CD4-positive, alpha-beta memory T cell (primary cell): ENCODE measurements at regions of chr20 and their contacts with region 1.

Region 1: DNA sequence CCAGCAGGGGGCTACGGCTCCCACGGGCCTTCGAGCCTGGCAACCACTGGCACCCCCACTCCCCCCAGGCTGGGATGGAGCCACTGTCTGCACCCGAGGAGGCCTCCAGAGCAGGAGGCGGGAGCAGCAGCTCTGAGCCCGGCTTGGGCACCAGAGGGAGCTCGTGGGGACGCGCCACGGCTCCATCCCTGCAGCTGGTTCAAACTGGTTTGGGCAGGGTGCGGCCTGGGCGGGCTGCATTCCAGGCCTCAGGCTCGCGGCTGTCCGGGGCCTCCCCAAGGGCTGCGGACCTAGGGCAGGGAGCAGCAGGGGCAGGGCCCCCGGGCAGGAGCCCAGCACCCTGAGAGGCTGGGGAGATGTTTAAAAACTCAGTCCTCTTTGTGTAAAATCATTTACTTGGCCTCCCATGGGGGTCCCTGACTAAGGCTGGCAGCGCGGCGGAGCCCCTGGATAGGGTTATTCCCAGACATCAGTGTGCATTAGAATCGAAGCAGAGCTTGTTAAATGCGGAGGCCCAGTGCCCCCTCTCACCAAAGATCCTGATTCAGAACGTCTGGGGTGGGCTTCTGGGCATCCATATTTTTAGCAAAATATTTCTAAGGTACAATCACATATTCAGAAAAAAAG is 4.1 kb upstream of the BCAS4 start:
- DNase-seq: peak; percentile 69 to 75 (median 72)
- H3K4me3 ChIP-seq: peak overlapping the region; percentile 6 to 30
- H3K4me3 Mint-ChIP-seq: peak overlapping the region in 4 of 8 donors; percentile 31 to 61 (median 39)
- H3K27ac ChIP-seq: peak overlapping the region; percentile 53
- H3K27ac Mint-ChIP-seq: peak overlapping the region in 4 of 7 donors; percentile 17 to 81 (median 60)
- H3K4me1 ChIP-seq: peaks cover 20% of the 10 kb centered on the region
- H3K4me1 Mint-ChIP-seq: peaks cover 4 to 11% (median 9%) of the 10 kb centered on the region in 4 donors
- H3K27me3 ChIP-seq: no peaks in the 10 kb centered on the region
- H3K27me3 Mint-ChIP-seq: no peaks in the 10 kb centered on the region

Region 2: DNA sequence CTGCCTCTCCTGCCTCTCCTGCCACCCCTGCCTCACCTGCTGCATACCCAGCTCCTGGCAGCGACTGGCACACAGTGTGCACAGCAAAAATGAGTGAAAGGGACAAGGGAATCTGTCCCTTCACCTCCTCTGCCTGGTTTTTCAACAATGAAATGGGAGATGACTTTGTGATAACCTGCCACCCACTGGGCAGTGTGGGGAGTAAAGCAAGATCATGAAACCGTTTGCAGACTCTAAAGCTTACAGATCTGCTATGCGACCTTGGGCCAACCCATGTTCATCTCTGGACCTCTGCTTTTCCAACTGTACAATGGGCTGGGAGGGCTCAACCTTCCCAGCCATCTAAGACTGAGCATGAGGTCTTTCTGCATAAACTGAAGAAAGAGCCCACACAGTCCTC is 180.5 kb before region 1 on chr20:
- CTCF ChIA-PET with region 1: no interaction called
- POLR2A ChIA-PET with region 1: no interaction called
- intact Hi-C with region 1: no loop called
- DNase-seq: no peak
- H3K4me3 ChIP-seq: no peak overlapping the region
- H3K4me3 Mint-ChIP-seq: no peak overlapping the region
- H3K27ac ChIP-seq: no peak overlapping the region
- H3K27ac Mint-ChIP-seq: no peak overlapping the region
- H3K4me1 ChIP-seq: no peaks in the 10 kb centered on the region
- H3K4me1 Mint-ChIP-seq: no peaks in the 10 kb centered on the region
- H3K27me3 ChIP-seq: no peaks in the 10 kb centered on the region
- H3K27me3 Mint-ChIP-seq: peaks cover 4 to 5% of the 10 kb centered on the region in 2 donors

Region 3: GRCh38 chr20:50731055-50731871 is 59.5 kb before region 1 on chr20 and contains the start of gene PARD6B:
- CTCF ChIA-PET with region 1: interaction called, 4 read pairs
- POLR2A ChIA-PET with region 1: interaction called, 9 read pairs
- intact Hi-C with region 1: loop called (anchors 2 kb)
- DNase-seq: peak; percentile 99 to 100 (median 100)
- H3K4me3 ChIP-seq: peak within 1 kb of the TSS; percentile 66 to 72
- H3K4me3 Mint-ChIP-seq: peak within 1 kb of the TSS; percentile 90 to 95 (median 92)
- H3K27ac ChIP-seq: peak within 1 kb of the TSS; percentile 55
- H3K27ac Mint-ChIP-seq: peak within 1 kb of the TSS; percentile 83 to 91 (median 87)
- H3K4me1 ChIP-seq: peaks cover 21% of the 10 kb centered on the region
- H3K4me1 Mint-ChIP-seq: peaks cover 16 to 37% (median 24%) of the 10 kb centered on the region in 4 donors
- H3K27me3 ChIP-seq: no peaks in the 10 kb centered on the region
- H3K27me3 Mint-ChIP-seq: no peaks in the 10 kb centered on the region
- total RNA-seq, gene PARD6B: 10.9 to 12.7 TPM

Region 4: DNA sequence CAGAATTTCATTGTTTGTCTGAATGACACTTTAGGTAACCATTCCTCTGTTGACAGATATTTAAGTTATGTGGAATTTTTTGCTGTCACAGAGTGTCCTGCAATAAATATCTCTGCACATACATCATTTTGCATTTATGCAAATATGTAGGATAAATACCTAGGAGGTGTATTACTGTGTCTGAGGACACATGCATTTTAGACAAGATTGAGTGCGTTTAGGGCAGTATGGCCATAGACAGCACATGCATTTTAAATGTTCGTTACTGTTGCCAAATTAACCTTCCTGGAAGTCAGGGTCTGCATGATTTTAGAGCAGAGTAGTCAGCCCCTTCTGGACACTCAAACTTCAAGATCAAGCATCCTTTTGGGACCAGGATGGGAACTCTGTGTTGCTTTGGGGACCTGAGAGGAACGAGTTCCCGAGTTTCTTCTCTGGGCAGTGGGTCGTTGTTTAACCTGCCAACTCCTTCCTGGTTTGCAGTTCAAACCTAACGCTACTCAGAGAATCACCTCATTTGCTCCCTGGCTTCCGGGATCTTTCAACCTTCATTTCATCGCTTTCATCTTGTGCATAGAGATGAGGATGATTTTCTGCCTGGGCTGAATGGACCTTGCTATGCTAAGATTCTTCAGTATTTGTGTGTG is 13.8 kb after region 1 on chr20:
- CTCF ChIA-PET with region 1: interaction called, 16 read pairs
- POLR2A ChIA-PET with region 1: interaction called, 10 read pairs
- intact Hi-C with region 1: loop called (anchors 1 kb)
- DNase-seq: peak; percentile 23 to 52 (median 37)
- H3K4me3 ChIP-seq: peak overlapping the region in 1 of 2 donors; percentile 22
- H3K4me3 Mint-ChIP-seq: peak overlapping the region in 7 of 8 donors; percentile 22 to 74 (median 59)
- H3K27ac ChIP-seq: peak overlapping the region; percentile 45
- H3K27ac Mint-ChIP-seq: peak overlapping the region; percentile 77 to 94 (median 90)
- H3K4me1 ChIP-seq: peaks cover 16% of the 10 kb centered on the region
- H3K4me1 Mint-ChIP-seq: peaks cover 14 to 24% (median 18%) of the 10 kb centered on the region in 4 donors
- H3K27me3 ChIP-seq: no peaks in the 10 kb centered on the region
- H3K27me3 Mint-ChIP-seq: no peaks in the 10 kb centered on the region

Region 5: DNA sequence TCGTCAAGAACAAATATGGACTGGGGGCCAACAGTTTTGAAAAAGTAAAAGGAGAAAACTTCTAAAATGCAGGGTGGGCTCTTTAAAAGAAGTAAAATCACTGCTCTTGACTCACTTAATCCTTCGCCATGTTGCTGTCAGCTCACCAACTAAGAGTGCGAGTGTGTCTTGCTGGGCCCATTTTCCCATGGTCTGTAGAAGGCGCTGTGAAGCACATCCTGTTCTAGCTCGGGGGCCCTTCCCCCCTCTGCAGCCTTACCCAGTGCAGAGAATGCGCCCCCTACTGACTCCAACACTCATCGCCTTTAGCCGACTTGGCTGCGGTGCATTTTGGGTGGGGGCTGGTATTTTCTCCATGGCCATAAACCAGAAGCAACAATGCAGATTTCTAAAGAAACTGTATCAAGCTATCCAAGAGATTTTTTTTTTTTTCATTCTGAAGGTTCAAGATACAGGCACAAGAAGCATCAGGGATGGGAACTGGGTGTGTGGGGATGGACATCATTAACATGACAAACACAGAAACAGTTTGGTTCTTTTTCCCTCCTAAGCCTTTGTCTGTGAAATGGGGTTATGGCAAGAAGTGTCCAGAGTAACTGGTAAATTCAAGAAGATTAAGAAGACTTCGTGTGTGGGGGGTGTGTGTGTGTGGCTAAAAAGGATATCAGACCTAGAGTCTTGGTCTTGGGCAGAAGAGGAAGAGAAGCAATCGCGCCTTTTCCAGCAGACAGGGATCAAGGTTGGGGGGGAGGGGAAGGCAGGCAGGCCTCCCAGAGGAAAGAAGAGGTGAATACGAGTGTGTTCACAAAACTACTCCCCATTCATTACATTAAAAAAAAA is 138.8 kb after region 1 on chr20:
- CTCF ChIA-PET with region 1: interaction called, 298 read pairs
- POLR2A ChIA-PET with region 1: interaction called, 109 read pairs
- intact Hi-C with region 1: loop called (anchors 1 kb)
- DNase-seq: peak; percentile 90 to 96 (median 92)
- H3K4me3 ChIP-seq: peak overlapping the region; percentile 39 to 49
- H3K4me3 Mint-ChIP-seq: peak overlapping the region; percentile 86 to 96 (median 92)
- H3K27ac ChIP-seq: peak overlapping the region; percentile 48
- H3K27ac Mint-ChIP-seq: peak overlapping the region; percentile 92 to 100 (median 95)
- H3K4me1 ChIP-seq: peaks cover 64% of the 10 kb centered on the region
- H3K4me1 Mint-ChIP-seq: peaks cover 37 to 62% (median 50%) of the 10 kb centered on the region in 4 donors
- H3K27me3 ChIP-seq: no peaks in the 10 kb centered on the region
- H3K27me3 Mint-ChIP-seq: no peaks in the 10 kb centered on the region

Region 6: GRCh38 chr20:50958615-50959542 is 168.1 kb after region 1 on chr20 and contains the start of gene MOCS3:
- CTCF ChIA-PET with region 1: interaction called, 21 read pairs
- POLR2A ChIA-PET with region 1: interaction called, 37 read pairs
- intact Hi-C with region 1: loop called (anchors 1 kb)
- DNase-seq: peak; percentile 93
- H3K4me3 ChIP-seq: peak within 1 kb of the TSS; percentile 86 to 90
- H3K4me3 Mint-ChIP-seq: peak within 1 kb of the TSS; percentile 91 to 98 (median 96)
- H3K27ac ChIP-seq: peak within 1 kb of the TSS; percentile 91
- H3K27ac Mint-ChIP-seq: peak within 1 kb of the TSS; percentile 96 to 100 (median 100)
- H3K4me1 ChIP-seq: peaks cover 40% of the 10 kb centered on the region
- H3K4me1 Mint-ChIP-seq: peaks cover 23 to 68% (median 52%) of the 10 kb centered on the region in 4 donors
- H3K27me3 ChIP-seq: no peaks in the 10 kb centered on the region
- H3K27me3 Mint-ChIP-seq: no peaks in the 10 kb centered on the region
- total RNA-seq, gene MOCS3: 8.8 to 8.9 TPM

Region 7: DNA sequence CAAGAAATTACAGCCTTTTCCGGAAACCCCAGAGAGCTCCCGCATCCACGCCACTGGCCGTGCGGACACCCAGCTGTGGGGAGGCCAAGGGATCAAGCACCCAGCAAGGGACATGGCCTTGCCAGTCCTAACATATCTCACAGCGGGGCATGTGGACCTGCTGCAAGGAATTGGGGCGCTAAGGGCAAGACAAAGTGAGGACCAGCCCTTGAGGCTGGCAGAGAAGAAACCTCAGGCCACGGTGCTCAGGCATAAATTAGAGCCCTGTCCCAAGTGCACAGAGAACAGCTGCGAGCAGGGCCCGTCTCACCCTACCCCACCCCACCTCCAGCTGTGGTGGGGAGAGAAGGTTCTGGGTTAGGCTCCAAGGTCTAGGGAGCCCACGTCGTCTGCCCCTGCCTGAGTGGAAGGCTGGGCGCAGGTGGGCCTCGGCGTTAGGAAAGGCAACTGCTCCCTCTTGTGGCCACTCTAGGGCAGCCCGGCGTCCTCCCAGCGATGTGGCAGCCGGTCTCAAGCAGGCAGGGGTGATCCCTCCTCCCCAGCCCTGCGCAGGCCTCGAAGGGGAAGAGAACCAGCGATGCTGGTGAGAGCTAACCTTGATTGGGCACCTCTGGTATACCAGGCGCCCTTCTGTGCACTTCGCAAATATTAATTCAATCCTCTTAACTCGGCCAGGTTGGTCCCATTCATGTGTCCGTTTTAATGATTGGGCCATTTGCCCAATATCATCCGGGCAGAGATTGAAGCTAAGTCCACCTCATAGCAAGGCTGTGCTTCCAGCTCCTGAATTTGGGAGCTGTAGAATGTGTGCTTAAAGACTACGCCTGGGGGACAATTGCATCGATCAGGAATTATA is 516.0 kb after region 1 on chr20:
- CTCF ChIA-PET with region 1: interaction called, 22 read pairs
- POLR2A ChIA-PET with region 1: interaction called, 4 read pairs
- intact Hi-C with region 1: loop called (anchors 1 kb)
- DNase-seq: peak; percentile 55 to 65 (median 59)
- H3K4me3 ChIP-seq: no peak overlapping the region
- H3K4me3 Mint-ChIP-seq: no peak overlapping the region
- H3K27ac ChIP-seq: no peak overlapping the region
- H3K27ac Mint-ChIP-seq: peak overlapping the region in 2 of 7 donors; percentile 12 to 39
- H3K4me1 ChIP-seq: no peaks in the 10 kb centered on the region
- H3K4me1 Mint-ChIP-seq: peaks cover 0 to 6% (median 3%) of the 10 kb centered on the region in 4 donors
- H3K27me3 ChIP-seq: no peaks in the 10 kb centered on the region
- H3K27me3 Mint-ChIP-seq: peaks cover 13 to 15% of the 10 kb centered on the region in 2 donors

Region 8: DNA sequence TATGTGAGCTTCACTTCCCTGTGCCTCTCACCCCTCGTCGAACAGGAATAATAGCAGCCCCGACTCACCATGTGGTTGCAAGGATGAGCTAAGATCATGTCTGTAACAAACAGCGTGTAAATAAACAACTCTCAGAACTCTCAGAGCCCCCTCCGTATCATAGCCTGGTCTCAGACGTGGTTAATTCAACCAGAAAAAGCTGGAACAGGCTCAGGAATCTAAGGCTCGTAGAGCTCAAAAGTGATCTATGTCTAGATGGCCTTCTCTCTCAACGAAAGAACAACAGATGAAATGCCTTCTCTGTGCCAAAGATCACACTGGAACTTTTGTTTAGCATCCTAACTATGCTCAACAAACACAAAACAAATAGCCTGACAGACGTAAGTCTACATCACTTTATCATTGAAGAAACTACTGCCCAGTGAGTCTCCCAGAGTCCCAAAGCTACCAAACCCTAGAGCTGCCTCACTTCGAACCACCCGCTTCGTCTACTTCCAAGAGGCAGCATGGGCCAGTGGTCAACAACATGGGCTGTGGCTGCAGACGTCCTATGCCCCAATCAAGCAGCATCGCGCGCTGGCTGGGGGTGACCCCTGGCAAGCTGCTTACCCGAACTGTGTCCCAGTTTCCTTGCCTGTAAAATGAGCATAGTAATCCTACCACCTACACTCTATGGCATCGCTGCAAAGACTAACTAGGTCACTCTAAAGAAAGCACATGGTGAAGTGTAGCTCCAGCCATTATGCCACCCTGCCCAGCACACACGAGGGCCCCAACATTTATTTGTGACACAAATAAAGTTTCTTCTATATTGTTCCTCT is 716.7 kb after region 1 on chr20:
- CTCF ChIA-PET with region 1: no interaction called
- POLR2A ChIA-PET with region 1: no interaction called
- intact Hi-C with region 1: no loop called
- DNase-seq: no peak
- H3K4me3 ChIP-seq: no peak overlapping the region
- H3K4me3 Mint-ChIP-seq: peak overlapping the region in 1 of 8 donors; percentile 54
- H3K27ac ChIP-seq: no peak overlapping the region
- H3K27ac Mint-ChIP-seq: peak overlapping the region in 4 of 7 donors; percentile 30 to 75 (median 70)
- H3K4me1 ChIP-seq: peaks cover 49% of the 10 kb centered on the region
- H3K4me1 Mint-ChIP-seq: peaks cover 41 to 67% (median 56%) of the 10 kb centered on the region in 4 donors
- H3K27me3 ChIP-seq: no peaks in the 10 kb centered on the region
- H3K27me3 Mint-ChIP-seq: no peaks in the 10 kb centered on the region